Activated CD4-positive, alpha-beta T cell treated with anti-CD3 and anti-CD28 coated beads for 36 hours (primary cell): ENCODE measurements at regions of chr14 and their contacts with region 1.

Region 1: GRCh38 chr14:91388551-91388975 is 29.1 kb downstream of the CCDC88C start:
- DNase-seq: peak; percentile 73
- ATAC-seq: peak; percentile 88
- H3K4me3 Mint-ChIP-seq: peak overlapping the region; percentile 26
- H3K27ac Mint-ChIP-seq: peak overlapping the region; percentile 85
- H3K4me1 Mint-ChIP-seq: peaks cover 89% of the 10 kb centered on the region
- H3K27me3 Mint-ChIP-seq: no peaks in the 10 kb centered on the region

Region 2: GRCh38 chr14:91220581-91221274 is 167.8 kb before region 1 on chr14:
- CTCF ChIA-PET with region 1: no interaction called
- POLR2A ChIA-PET with region 1: no interaction called
- intact Hi-C with region 1: no loop called
- DNase-seq: no peak
- ATAC-seq: no peak
- H3K4me3 Mint-ChIP-seq: no peak overlapping the region
- H3K27ac Mint-ChIP-seq: peak overlapping the region; percentile 26
- H3K4me1 Mint-ChIP-seq: peaks cover 44% of the 10 kb centered on the region
- H3K27me3 Mint-ChIP-seq: no peaks in the 10 kb centered on the region

Region 3: GRCh38 chr14:91264151-91265150 is 124.1 kb before region 1 on chr14:
- CTCF ChIA-PET with region 1: no interaction called
- POLR2A ChIA-PET with region 1: no interaction called
- intact Hi-C with region 1: no loop called
- DNase-seq: no peak
- ATAC-seq: peak; percentile 44
- H3K4me3 Mint-ChIP-seq: peak overlapping the region; percentile 64
- H3K27ac Mint-ChIP-seq: peak overlapping the region; percentile 66
- H3K4me1 Mint-ChIP-seq: peaks cover 58% of the 10 kb centered on the region
- H3K27me3 Mint-ChIP-seq: no peaks in the 10 kb centered on the region

Region 4: GRCh38 chr14:91373591-91374254 is 14.8 kb before region 1 on chr14:
- CTCF ChIA-PET with region 1: interaction called, 8 read pairs
- POLR2A ChIA-PET with region 1: interaction called, 6 read pairs
- intact Hi-C with region 1: loop called in 1 of 2 experiments (anchors 2 kb)
- DNase-seq: peak; percentile 81
- ATAC-seq: peak; percentile 71
- H3K4me3 Mint-ChIP-seq: peak overlapping the region; percentile 50
- H3K27ac Mint-ChIP-seq: peak overlapping the region; percentile 86
- H3K4me1 Mint-ChIP-seq: peaks cover 99% of the 10 kb centered on the region
- H3K27me3 Mint-ChIP-seq: no peaks in the 10 kb centered on the region

Region 5: GRCh38 chr14:91402771-91403600 is 14.4 kb after region 1 on chr14:
- CTCF ChIA-PET with region 1: interaction called, 11 read pairs
- POLR2A ChIA-PET with region 1: interaction called, 3 read pairs
- intact Hi-C with region 1: loop called in 1 of 2 experiments (anchors 2 kb)
- DNase-seq: no peak
- ATAC-seq: no peak
- H3K4me3 Mint-ChIP-seq: peak overlapping the region; percentile 46
- H3K27ac Mint-ChIP-seq: peak overlapping the region; percentile 88
- H3K4me1 Mint-ChIP-seq: peaks cover 93% of the 10 kb centered on the region
- H3K27me3 Mint-ChIP-seq: no peaks in the 10 kb centered on the region

Region 6: GRCh38 chr14:91444335-91445020 is 55.9 kb after region 1 on chr14:
- CTCF ChIA-PET with region 1: no interaction called
- POLR2A ChIA-PET with region 1: no interaction called
- intact Hi-C with region 1: no loop called
- DNase-seq: no peak
- ATAC-seq: no peak
- H3K4me3 Mint-ChIP-seq: no peak overlapping the region
- H3K27ac Mint-ChIP-seq: no peak overlapping the region
- H3K4me1 Mint-ChIP-seq: no peaks in the 10 kb centered on the region
- H3K27me3 Mint-ChIP-seq: no peaks in the 10 kb centered on the region